Activated CD8-positive, alpha-beta memory T cell treated with anti-CD3 and anti-CD28 coated beads, Interleukin-2, amount 10 ng/mL, durations not matched to agents 7 days and 5 days (primary cell): ENCODE measurements at regions of chr5 and their contacts with region 1.

Region 1: GRCh38 chr5:80255732-80256479 is at the start of gene SERINC5:
- DNase-seq: peak; percentile 90
- ATAC-seq: peak; percentile 79
- H3K4me3 Mint-ChIP-seq: peak within 1 kb of the TSS; percentile 94
- H3K27ac Mint-ChIP-seq: peak within 1 kb of the TSS; percentile 94
- H3K4me1 Mint-ChIP-seq: peaks cover 53% of the 10 kb centered on the region
- H3K27me3 Mint-ChIP-seq: no peaks in the 10 kb centered on the region
- total RNA-seq, gene SERINC5: 26.8 to 38.0 TPM

Region 2: GRCh38 chr5:80109646-80110478 is 146.0 kb before region 1 on chr5:
- CTCF ChIA-PET with region 1: no interaction called
- DNase-seq: no peak
- ATAC-seq: no peak
- H3K4me3 Mint-ChIP-seq: no peak overlapping the region
- H3K27ac Mint-ChIP-seq: no peak overlapping the region
- H3K4me1 Mint-ChIP-seq: no peaks in the 10 kb centered on the region
- H3K27me3 Mint-ChIP-seq: no peaks in the 10 kb centered on the region

Region 3: GRCh38 chr5:80191991-80192398 is 63.9 kb before region 1 on chr5:
- CTCF ChIA-PET with region 1: interaction called, 22 read pairs
- DNase-seq: peak; percentile 82
- ATAC-seq: peak; percentile 76
- H3K4me3 Mint-ChIP-seq: peak overlapping the region; percentile 67
- H3K27ac Mint-ChIP-seq: peak overlapping the region; percentile 96
- H3K4me1 Mint-ChIP-seq: peaks cover 80% of the 10 kb centered on the region
- H3K27me3 Mint-ChIP-seq: no peaks in the 10 kb centered on the region

Region 4: GRCh38 chr5:80216753-80217596 is 38.9 kb before region 1 on chr5:
- CTCF ChIA-PET with region 1: interaction called, 27 read pairs
- DNase-seq: peak; percentile 66
- ATAC-seq: peak; percentile 34
- H3K4me3 Mint-ChIP-seq: peak overlapping the region; percentile 77
- H3K27ac Mint-ChIP-seq: peak overlapping the region; percentile 88
- H3K4me1 Mint-ChIP-seq: peaks cover 71% of the 10 kb centered on the region
- H3K27me3 Mint-ChIP-seq: no peaks in the 10 kb centered on the region

Region 5: GRCh38 chr5:80268916-80269315 is 13.0 kb after region 1 on chr5:
- CTCF ChIA-PET with region 1: interaction called, 13 read pairs
- DNase-seq: no peak
- ATAC-seq: no peak
- H3K4me3 Mint-ChIP-seq: no peak overlapping the region
- H3K27ac Mint-ChIP-seq: peak overlapping the region; percentile 77
- H3K4me1 Mint-ChIP-seq: peaks cover 27% of the 10 kb centered on the region
- H3K27me3 Mint-ChIP-seq: no peaks in the 10 kb centered on the region